H1 (cell line): ENCODE measurements at regions of chr5 and their contacts with region 1.

Region 1: DNA sequence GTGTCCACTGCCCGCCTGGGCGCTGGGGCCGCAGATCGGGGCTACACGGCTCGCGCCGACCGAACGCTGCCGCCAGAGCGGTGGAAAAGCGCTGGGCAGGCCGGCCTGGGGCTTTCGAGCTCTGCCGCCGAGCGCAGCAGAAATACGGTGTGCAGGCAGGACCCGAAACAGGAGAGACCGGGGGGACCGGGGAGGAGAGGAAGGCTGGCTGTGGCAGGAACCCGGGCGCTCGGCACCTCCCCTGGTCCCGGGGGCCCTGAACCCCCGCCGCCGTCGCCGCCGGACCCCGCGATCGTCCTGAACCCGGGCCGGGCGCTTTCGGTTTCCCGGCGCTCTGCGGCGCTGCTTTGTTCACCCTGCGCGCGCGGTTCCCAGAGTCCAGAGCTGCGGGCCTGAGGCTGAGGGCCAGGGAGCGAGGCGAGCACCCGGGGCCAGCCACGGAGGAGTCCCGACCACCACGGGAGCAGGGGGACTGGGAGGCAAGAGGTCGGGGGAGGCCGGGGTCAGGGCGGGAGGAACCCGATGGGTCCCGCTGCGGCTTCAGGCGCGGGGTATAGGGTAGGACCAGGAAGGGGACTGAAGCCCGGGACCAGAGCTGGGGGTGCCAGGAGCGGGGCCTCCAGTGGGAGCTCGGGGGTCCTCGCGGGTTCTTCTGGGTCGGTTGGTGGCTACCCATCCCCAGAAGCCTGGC is 12.0 kb downstream of the IRX2 start:
- DNase-seq: peak in 1 of 2 experiments; percentile 79
- H3K4me3 ChIP-seq: peak overlapping the region; percentile 38 to 62 (median 40)
- H3K27ac ChIP-seq: no peak overlapping the region
- H3K4me1 ChIP-seq: peaks cover 3 to 31% (median 14%) of the 10 kb centered on the region in 4 experiments
- H3K27me3 ChIP-seq: peaks cover 31 to 71% (median 64%) of the 10 kb centered on the region in 4 experiments
- CTCF ChIP-seq: no peak
- EP300 ChIP-seq: no peak
- POLR2A ChIP-seq: no peak
- RAD21 ChIP-seq: no peak

Region 2: DNA sequence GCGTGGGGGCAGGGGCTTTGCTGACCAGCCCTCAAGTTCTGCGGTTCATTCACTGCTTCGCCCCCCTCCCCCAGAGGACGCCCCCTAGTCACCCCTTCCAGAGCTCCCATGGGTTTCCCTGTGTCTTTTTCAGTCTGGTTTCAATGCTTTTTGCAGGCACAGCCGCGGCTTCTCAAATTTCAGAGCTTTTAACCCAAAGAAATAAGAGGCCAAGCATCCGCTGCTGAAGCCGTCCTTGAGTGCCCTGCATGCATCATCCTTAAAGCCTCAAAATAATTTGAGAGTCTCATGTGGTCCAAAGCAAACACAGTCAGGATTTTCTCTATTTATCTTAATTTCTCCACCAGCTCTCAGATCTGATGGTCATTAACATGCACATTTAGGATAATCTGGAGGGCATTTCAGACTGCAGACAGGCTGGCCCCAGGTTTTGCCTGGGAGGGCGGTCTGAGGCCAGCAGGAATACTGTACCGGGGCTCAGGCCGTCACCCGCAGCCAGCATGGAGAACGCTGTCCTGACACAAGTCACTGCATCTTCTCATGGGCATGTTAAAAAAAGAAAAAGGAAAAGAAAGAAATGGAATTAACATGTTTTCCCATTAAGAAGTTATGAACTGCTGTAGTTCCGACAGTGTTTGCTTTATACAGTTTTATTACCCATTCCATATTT is 435.9 kb before region 1 on chr5:
- CTCF ChIA-PET with region 1: no interaction called
- POLR2A ChIA-PET with region 1: no interaction called
- DNase-seq: no peak
- H3K4me3 ChIP-seq: no peak overlapping the region
- H3K27ac ChIP-seq: no peak overlapping the region
- H3K4me1 ChIP-seq: peaks cover 0 to 7% (median under 1%) of the 10 kb centered on the region in 4 experiments; a peak in 3 of 7 replicates
- H3K27me3 ChIP-seq: no peaks in the 10 kb centered on the region
- CTCF ChIP-seq: no peak
- EP300 ChIP-seq: no peak
- POLR2A ChIP-seq: no peak
- RAD21 ChIP-seq: no peak

Region 3: DNA sequence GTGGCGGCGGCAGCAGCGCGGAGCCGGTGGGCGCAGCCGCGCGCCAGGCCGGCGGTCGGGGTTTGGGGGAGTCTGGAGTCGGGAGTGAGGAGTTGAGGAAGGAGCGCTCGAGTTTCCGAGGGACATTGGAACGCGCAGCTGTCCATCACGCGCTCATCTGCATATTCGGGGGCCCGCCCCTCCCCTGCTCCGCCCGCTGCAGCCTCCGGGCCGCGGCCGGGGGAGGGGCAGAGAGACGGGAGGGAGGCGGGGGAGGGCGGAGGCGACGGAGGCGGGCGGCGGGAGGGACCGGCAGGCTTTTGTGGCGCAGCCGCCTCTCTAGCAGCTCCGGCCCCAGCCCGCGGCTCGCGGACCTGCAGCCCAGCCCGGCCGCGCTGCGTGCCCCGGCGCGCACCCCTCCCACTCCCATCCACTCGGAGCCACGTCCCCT is 12.1 kb after region 1 on chr5 and contains the start of gene IRX2:
- CTCF ChIA-PET with region 1: interaction called, 9 read pairs
- POLR2A ChIA-PET with region 1: interaction called, 64 read pairs
- DNase-seq: peak; percentile 77 to 90
- H3K4me3 ChIP-seq: peak within 1 kb of the TSS; percentile 77 to 98 (median 80)
- H3K27ac ChIP-seq: peak within 1 kb of the TSS; percentile 62; the same call in 1 of the 2 replicates
- H3K4me1 ChIP-seq: peaks cover 0 to 27% (median 9%) of the 10 kb centered on the region in 4 experiments; a peak in 6 of 7 replicates
- H3K27me3 ChIP-seq: peaks cover 4 to 42% (median 29%) of the 10 kb centered on the region in 4 experiments
- CTCF ChIP-seq: no peak
- EP300 ChIP-seq: no peak
- POLR2A ChIP-seq: peak in 1 of 2 experiments; percentile 84; a peak in 2 of 3 replicates
- RAD21 ChIP-seq: 0 out of 4 replicates have a peak, but pooled peaks of 1 of the 2 experiments have one; percentile 4
- total RNA-seq, gene IRX2: 40.4 and 47.5 TPM in 2 replicates